Activated CD4-positive, alpha-beta memory T cell treated with anti-CD3 and anti-CD28 coated beads, Interleukin-2, amount 10 ng/mL, durations not matched to agents 7 days and 5 days (primary cell): ENCODE measurements at regions of chr15 and their contacts with region 1.

Region 1: GRCh38 chr15:74124759-74125158 is 5.6 kb upstream of the ISLR2 start:
- DNase-seq: no peak
- H3K4me3 Mint-ChIP-seq: no peak overlapping the region
- H3K27ac Mint-ChIP-seq: no peak overlapping the region
- H3K4me1 Mint-ChIP-seq: peaks cover 5% of the 10 kb centered on the region
- H3K27me3 Mint-ChIP-seq: peaks cover 54% of the 10 kb centered on the region

Region 2: DNA sequence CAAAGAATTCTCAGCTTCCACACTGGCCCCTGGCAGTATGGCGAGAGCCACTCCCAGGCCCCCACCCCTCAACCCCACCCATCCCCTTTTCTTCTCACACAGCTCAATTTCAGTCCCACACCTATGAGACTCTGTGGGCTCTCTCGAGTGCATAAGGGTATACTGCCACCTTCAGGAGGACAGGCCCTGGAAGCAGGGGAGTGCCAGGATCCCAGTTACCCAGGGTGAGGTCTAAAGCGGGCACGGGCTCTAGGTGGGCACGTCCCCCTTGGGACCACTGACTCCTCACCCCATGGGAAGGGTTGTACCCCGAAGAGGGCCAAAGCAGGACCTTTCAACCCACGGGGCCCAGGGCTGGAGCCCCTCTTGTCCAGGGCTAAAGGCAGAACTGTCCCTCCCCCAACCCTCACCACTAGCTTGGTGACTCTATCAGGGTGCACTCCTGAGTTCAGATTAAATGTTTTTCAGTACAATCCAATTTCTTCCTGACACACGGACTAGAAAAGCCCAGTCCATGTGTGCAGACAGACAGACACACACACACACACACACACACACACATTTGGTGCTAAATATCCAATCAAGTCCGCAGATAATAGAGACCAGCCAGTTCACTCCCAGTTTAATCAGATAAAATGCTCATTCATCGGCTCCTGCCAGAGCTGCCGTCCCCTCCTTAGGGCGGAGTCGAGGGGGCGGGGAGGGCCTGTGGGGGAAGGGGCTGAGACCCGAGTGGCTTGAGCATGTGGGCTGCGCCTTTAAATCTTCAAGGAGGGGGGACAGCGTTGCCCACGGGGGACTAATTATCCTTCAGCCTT is 183.3 kb after region 1 on chr15:
- CTCF ChIA-PET with region 1: interaction called, 13 read pairs
- POLR2A ChIA-PET with region 1: no interaction called
- DNase-seq: peak; percentile 43
- H3K4me3 Mint-ChIP-seq: no peak overlapping the region
- H3K27ac Mint-ChIP-seq: no peak overlapping the region
- H3K4me1 Mint-ChIP-seq: no peaks in the 10 kb centered on the region
- H3K27me3 Mint-ChIP-seq: peaks cover 32% of the 10 kb centered on the region

Region 3: GRCh38 chr15:74322181-74323076 is 197.7 kb after region 1 on chr15:
- CTCF ChIA-PET with region 1: interaction called, 15 read pairs
- POLR2A ChIA-PET with region 1: interaction called, 3 read pairs
- DNase-seq: peak; percentile 67
- H3K4me3 Mint-ChIP-seq: no peak overlapping the region
- H3K27ac Mint-ChIP-seq: no peak overlapping the region
- H3K4me1 Mint-ChIP-seq: peaks cover 3% of the 10 kb centered on the region
- H3K27me3 Mint-ChIP-seq: peaks cover 2% of the 10 kb centered on the region